Esophagus squamous epithelium (tissue), 5 donors: ENCODE measurements at regions of chr3 and their contacts with region 1.

Region 1: DNA sequence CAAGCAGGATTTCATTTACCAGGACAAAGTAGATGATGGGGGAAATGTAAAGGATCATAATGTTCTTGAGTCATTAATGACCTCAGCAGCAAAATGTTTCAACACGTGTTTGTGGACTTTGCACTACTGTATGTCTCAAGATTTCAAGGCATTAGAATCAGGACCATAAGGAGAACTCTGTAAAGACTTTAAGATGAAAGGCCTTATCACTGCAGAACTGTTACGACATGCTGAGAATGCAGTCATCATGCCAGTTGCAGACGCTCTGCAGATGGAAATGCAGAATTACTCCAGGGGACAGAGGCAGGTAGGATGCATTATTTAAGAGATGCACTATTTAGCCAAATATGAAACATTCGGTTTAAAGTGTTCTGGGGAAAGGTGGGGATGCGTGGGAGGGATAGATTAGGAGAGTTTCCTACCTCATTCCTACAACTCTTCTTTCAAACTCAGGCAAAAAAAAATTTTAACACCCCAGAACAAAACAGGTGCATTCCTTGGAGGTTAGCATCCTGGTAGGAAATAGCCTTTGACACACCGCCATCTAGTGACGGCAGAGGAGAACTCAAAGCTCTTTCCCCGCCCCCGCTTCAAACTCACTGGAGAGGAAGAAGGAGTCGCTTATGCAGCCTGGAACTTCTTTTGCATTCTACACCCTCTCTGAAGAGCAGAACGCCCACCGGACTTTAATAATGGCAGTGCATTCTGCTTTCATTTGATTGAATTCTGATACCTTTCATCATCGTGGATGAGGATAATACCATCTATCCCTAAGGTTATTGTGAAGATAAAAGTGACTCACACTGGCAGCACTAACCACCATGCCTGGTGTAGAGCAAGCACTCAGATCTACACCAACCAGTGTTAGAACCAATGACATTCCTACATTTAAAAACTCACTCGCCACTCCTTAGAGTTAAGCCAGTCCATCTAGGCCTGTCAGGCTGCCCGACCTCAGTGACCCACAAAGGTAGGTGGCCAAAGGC is 43.1 kb upstream of the TOPAZ1 start:
- DNase-seq: peak; percentile 13
- H3K4me3 ChIP-seq: no peak overlapping the region
- H3K27ac ChIP-seq: no peak overlapping the region
- H3K4me1 ChIP-seq: no peaks in the 10 kb centered on the region
- H3K27me3 ChIP-seq: peaks cover 0 to 18% (median 0%) of the 10 kb centered on the region in 4 donors
- CTCF ChIP-seq: peak; percentile 53 to 79 (median 70)
- POLR2A ChIP-seq: no peak

Region 2: GRCh38 chr3:43540624-43541023 is 658.0 kb before region 1 on chr3:
- intact Hi-C with region 1: loop called (anchors 10 kb)
- DNase-seq: no peak
- H3K4me3 ChIP-seq: no peak overlapping the region
- H3K27ac ChIP-seq: no peak overlapping the region
- H3K4me1 ChIP-seq: no peaks in the 10 kb centered on the region
- H3K27me3 ChIP-seq: no peaks in the 10 kb centered on the region
- CTCF ChIP-seq: no peak
- POLR2A ChIP-seq: no peak

Region 3: DNA sequence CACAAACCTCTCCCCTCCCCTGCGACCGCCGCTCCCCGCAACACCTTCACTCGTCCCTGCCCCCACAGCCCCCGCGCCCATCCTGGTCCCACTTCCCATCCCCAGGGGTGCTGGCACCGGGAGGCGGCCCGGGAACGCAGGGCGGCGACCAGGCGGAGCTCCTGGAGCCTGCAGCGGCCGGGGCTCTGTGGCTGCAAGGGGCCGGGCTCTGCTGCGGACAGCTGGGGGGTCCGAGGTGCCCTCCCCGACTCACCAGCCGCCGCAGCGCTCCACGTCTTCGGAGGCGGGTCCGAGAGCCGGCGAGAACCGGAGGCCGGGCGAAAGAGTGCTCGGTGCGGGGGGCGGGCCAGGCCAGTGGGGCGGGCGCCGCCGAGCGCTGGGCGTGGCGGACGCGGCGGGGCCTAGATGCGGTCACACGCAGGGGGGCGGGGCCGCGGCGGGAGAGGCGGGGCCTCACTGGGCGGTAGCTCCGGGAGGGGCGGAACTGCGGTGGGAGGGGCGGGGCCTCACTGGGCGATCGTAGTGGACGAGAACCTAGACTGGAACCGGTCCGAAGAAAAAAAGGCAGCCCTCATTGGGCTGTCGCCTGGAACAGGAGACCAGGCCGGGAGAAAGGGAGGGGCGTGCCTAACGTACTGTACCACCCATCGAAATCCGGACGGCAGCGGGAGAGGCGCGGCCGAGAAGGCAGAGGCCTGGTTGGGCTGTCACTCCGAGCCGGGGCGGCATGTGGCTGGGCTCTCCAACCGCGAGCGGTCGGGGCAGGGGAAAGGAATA is 576.7 kb before region 1 on chr3 and contains the start of gene ANO10:
- intact Hi-C with region 1: no loop called
- DNase-seq: peak; percentile 86
- H3K4me3 ChIP-seq: peak within 1 kb of the TSS; percentile 88 to 98 (median 92)
- H3K27ac ChIP-seq: peak within 1 kb of the TSS; percentile 89 to 96 (median 92)
- H3K4me1 ChIP-seq: peaks cover 0 to 22% (median 7%) of the 10 kb centered on the region in 3 donors
- H3K27me3 ChIP-seq: no peaks in the 10 kb centered on the region
- CTCF ChIP-seq: no peak
- POLR2A ChIP-seq: peak in 2 of 4 donors; percentile 45 to 61
- total RNA-seq, gene ANO10: 18.5 to 22.3 (median 20.3) TPM